Posterior cingulate gyrus (tissue), 11 donors: ENCODE measurements at regions of chr11 and their contacts with region 1.

Region 1: DNA sequence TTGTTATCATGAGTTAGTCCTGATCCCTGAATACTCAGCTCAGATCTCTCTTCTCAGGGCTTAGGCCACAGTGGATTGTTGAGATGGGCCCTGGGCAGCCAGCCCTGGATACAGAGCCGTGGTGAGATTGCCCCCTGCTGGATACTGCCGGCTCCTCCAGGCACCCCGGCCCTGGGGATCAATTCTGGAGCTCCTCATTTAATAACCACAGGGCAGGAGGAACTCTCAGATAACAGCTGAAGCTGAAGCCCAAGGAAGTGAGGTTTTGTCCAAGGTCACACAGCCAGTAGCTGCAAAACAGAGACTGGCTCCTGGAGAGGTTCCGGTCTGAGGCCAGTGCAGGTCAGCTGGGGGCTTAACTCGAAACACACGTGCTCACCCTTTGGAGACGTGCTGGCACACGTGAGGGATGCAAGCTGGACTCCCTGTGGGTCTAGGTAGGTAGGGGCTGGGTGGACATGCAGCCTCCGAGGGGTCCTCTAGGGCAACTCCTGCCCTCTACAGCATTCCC is 16.0 kb downstream of the USH1C start:
- DNase-seq: peak; percentile 54 to 96 (median 78)

Region 2: DNA sequence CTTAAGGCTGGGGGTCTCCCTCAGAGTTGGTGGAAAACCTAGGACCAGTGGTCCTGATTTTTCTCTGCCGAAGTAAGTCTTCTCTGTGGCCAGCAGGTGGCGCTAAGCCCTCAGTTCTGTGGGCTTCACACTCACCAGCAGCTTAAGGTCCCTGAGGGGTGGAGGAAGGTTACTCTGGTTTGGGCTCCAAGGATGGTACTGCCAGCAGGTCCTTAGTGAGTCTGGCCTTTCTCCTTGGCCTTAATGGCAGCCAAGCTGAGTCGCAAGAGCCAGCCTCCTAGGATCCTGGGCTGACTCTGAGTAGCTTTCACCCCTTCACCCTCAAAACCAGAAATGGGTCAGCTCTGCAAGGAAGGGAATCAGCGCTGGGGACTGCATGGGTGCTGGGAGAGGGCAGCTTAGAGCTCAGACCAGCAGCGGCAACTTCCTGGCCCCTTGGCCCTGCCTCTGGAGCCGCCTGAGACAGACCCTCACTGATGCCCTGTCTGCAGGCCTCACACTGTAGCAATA is 144.2 kb before region 1 on chr11:
- intact Hi-C with region 1: loop called (anchors 2 kb)
- DNase-seq: peak; percentile 65 to 98 (median 84)

Region 3: GRCh38 chr11:17413414-17414316 is 114.6 kb before region 1 on chr11:
- intact Hi-C with region 1: no loop called
- DNase-seq: peak in 3 of 10 donors; percentile 11 to 72 (median 35)

Region 4: DNA sequence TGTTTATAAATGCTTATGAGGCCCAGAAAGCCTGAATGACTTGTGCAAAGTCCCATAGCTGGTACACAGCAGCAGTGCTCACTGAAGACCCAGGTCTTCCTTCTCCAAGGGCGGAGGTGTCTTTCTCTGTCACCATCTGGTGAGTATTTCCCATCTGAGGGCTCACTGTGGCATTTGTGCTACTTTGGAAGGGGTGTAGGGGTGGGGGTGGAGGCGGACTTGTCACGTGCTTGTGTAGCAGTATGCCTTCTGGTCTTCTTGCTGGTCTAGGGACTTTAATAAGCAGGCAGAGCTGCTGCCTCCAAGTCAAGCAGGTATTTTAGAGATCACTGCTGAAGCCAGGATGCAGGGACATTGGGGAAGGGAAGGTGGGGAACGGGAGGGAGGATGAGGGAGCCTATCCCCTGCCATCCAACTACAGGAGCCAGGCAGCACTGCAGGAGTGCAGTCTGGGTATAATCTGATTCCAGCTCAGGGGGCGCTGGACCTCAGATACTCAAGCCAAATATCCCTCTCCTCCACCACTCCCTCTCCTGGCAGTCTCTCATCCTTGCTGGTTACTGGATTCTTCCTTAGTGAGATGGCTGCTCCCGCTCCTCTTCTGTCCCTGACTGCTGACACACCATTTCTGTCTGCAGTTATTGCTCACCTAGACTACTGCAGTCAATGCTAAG is 55.0 kb before region 1 on chr11:
- intact Hi-C with region 1: no loop called
- DNase-seq: peak in 3 of 10 donors; percentile 8 to 20 (median 17)